Right cardiac atrium (tissue), 5 donors: ENCODE measurements at regions of chr20 and their contacts with region 1.

Region 1: GRCh38 chr20:9912858-9913434 is 74.1 kb upstream of the PAK5 start:
- DNase-seq: peak; percentile 15 to 61 (median 52)
- ATAC-seq: no peak
- H3K4me3 ChIP-seq: no peak overlapping the region
- H3K27ac ChIP-seq: no peak overlapping the region
- H3K4me1 ChIP-seq: no peaks in the 10 kb centered on the region
- H3K27me3 ChIP-seq: no peaks in the 10 kb centered on the region

Region 2: GRCh38 chr20:9616833-9617489 is 296.0 kb before region 1 on chr20:
- intact Hi-C with region 1: loop called in 3 of 4 experiments (anchors 2 to 5 kb)
- DNase-seq: peak; percentile 48 to 71 (median 66)
- ATAC-seq: peak; percentile 72 to 75
- H3K4me3 ChIP-seq: no peak overlapping the region
- H3K27ac ChIP-seq: no peak overlapping the region
- H3K4me1 ChIP-seq: no peaks in the 10 kb centered on the region
- H3K27me3 ChIP-seq: no peaks in the 10 kb centered on the region